ENCODE measurements at regions of chr9 and their contacts with region 1.

Region 1: DNA sequence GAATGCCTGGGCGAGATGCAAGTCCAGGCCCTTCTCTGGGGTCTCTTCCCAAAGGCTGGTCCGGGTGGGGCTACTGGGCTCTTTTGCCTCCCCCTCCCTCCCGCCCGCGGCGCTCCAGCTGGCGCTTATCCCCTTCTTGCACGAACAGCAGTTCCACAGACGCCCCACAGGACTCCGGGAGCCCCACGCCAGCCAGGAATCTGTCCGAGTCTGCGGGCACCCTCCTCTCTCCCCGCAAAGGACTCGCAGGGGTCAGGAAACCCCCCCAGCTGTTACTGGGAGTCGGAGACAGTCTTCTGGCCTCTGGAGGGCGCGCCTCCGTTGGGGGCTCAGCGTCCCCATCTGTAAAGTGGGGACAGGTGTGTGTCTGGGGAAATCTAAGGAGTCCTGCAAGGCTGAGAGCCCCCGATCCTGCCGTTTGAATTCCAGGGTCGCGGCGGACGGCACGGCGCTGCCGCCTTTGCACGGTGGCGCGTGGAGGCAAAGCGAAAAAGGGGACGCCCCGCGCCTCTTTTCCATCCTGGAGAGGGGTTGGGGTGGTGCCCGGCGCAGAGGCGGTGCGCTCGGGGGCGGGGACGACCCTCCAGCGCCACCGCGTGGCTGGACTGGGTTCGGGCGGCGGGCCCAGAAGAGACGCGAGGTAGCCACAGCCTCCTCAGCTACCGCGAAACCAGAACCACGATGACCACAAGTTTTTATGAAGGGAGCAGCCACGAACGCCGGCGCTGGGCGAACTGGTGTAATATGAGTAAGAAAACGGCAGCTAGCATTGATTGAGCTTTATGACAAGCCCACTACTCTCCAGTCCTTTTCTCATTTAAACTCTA is 2.9 kb upstream of the CCIN start:
- DNase-seq: peak; percentile 88
- ATAC-seq: peak; percentile 98
- H3K4me3 Mint-ChIP-seq: peak overlapping the region; percentile 72
- H3K27ac Mint-ChIP-seq: peak overlapping the region; percentile 69
- H3K4me1 Mint-ChIP-seq: peaks cover 19% of the 10 kb centered on the region
- H3K27me3 Mint-ChIP-seq: peaks cover 14% of the 10 kb centered on the region

Region 2: GRCh38 chr9:36023260-36024048 is 142.9 kb before region 1 on chr9:
- CTCF ChIA-PET with region 1: interaction called, 16 read pairs
- POLR2A ChIA-PET with region 1: no interaction called
- DNase-seq: peak; percentile 79
- ATAC-seq: peak; percentile 88
- H3K4me3 Mint-ChIP-seq: no peak overlapping the region
- H3K27ac Mint-ChIP-seq: no peak overlapping the region
- H3K4me1 Mint-ChIP-seq: no peaks in the 10 kb centered on the region
- H3K27me3 Mint-ChIP-seq: peaks cover 6% of the 10 kb centered on the region

Region 3: DNA sequence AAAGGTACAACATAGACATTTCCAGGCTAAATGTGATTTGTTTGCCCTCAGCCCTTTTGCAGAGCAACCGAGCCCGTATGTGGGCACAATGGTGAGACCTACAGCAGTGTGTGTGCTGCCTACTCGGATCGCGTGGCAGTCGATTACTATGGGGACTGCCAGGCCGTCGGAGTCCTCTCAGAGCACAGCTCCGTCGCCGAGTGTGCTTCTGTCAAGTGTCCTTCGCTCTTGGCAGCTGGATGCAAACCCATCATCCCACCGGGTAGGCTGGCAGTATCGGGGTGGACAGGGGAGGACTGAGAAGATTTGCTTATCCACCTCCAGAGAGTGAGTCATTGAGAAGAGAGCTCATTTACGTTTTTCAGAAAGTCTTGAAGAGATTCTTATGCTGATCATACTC is 47.6 kb before region 1 on chr9:
- CTCF ChIA-PET with region 1: interaction called, 22 read pairs
- POLR2A ChIA-PET with region 1: no interaction called
- DNase-seq: no peak
- ATAC-seq: no peak
- H3K4me3 Mint-ChIP-seq: no peak overlapping the region
- H3K27ac Mint-ChIP-seq: no peak overlapping the region
- H3K4me1 Mint-ChIP-seq: no peaks in the 10 kb centered on the region
- H3K27me3 Mint-ChIP-seq: no peaks in the 10 kb centered on the region

Region 4: GRCh38 chr9:36136272-36136893 is 29.9 kb before region 1 on chr9 and contains the start of gene GLIPR2:
- CTCF ChIA-PET with region 1: interaction called, 22 read pairs
- POLR2A ChIA-PET with region 1: interaction called, 6 read pairs
- DNase-seq: peak; percentile 83
- ATAC-seq: peak; percentile 98
- H3K4me3 Mint-ChIP-seq: peak within 1 kb of the TSS; percentile 87
- H3K27ac Mint-ChIP-seq: peak within 1 kb of the TSS; percentile 75
- H3K4me1 Mint-ChIP-seq: peaks cover 51% of the 10 kb centered on the region
- H3K27me3 Mint-ChIP-seq: peaks cover 23% of the 10 kb centered on the region
- total RNA-seq, gene GLIPR2: 67.8 to 73.0 TPM

Region 5: GRCh38 chr9:36190388-36191287 is 24.3 kb after region 1 on chr9 and contains the start of gene CLTA:
- CTCF ChIA-PET with region 1: interaction called, 25 read pairs
- POLR2A ChIA-PET with region 1: interaction called, 8 read pairs
- DNase-seq: peak; percentile 98
- ATAC-seq: peak; percentile 98
- H3K4me3 Mint-ChIP-seq: peak within 1 kb of the TSS; percentile 93
- H3K27ac Mint-ChIP-seq: peak within 1 kb of the TSS; percentile 91
- H3K4me1 Mint-ChIP-seq: peaks cover 55% of the 10 kb centered on the region
- H3K27me3 Mint-ChIP-seq: peaks cover 8% of the 10 kb centered on the region
- total RNA-seq, gene CLTA: 167 to 170 TPM

Measured in activated CD8-positive, alpha-beta T cell treated with anti-CD3 and anti-CD28 coated beads, Interleukin-2, amount 10 ng/mL, durations not matched to agents 7 days and 5 days (primary cell).